ENCODE measurements at regions of chr10 and their contacts with region 1.

Region 1: DNA sequence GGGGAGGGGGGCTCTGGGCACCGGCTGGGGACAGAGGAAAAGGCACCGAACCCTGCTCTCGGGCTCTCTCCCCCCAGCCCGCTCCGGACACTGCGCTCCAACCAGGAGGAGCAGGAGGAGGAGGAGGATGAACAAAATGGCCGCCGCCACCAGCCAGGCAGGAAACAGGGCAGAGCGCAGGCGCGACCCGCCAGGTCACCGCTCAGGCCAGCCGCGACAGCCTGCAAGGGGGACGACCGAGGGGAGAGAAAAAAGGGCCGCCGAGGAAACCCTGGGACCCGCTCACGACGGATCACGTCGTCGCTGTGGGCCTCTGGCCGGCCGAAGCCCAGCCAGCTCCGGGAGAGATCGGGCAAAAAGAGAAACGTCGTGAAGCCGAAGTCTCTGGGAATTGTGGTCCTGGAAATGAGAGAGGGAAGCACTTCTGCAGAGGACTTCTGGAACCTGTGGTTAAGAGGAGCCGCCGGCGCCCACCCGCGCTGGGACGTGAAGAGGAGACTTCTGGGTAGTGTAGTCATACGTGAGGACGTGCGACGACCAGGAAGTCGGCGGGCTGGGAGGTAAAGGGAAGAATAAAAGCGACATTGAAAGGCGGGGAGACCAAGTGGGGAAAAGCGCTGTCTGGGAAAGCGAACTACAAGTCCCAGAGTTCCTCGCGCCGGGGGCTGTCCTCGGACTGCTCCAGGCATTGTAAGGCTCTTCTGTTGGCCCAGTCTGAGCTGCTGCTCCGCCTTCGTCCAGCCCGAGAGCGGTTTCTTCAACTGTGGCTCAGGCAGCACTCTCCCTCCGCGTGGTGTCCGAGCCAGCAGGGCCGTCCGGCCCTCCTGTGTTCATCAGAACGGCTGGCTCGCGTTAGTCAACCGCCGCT is at the start of gene TIAL1:
- DNase-seq: peak in 1 of 2 donors; percentile 99
- H3K4me3 ChIP-seq: peak within 1 kb of the TSS; percentile 73 to 91
- H3K27ac ChIP-seq: peak within 1 kb of the TSS; percentile 98
- H3K4me1 ChIP-seq: peaks cover 46% of the 10 kb centered on the region
- H3K27me3 ChIP-seq: no peaks in the 10 kb centered on the region
- CTCF ChIP-seq: no peak
- POLR2A ChIP-seq: peak in 1 of 2 donors; percentile 27
- total RNA-seq, gene TIAL1: 71.2 TPM

Region 2: GRCh38 chr10:119650692-119651513 is 54.1 kb after region 1 on chr10 and contains the start of gene BAG3:
- intact Hi-C with region 1: loop called (anchors 5 kb)
- DNase-seq: peak in 1 of 2 donors; percentile 96
- H3K4me3 ChIP-seq: peak within 1 kb of the TSS; percentile 80 to 97
- H3K27ac ChIP-seq: peak within 1 kb of the TSS; percentile 100
- H3K4me1 ChIP-seq: peaks cover 34% of the 10 kb centered on the region
- H3K27me3 ChIP-seq: no peaks in the 10 kb centered on the region
- CTCF ChIP-seq: no peak
- POLR2A ChIP-seq: peak in 1 of 2 donors; percentile 81
- total RNA-seq, gene BAG3: 69.0 TPM

Region 3: DNA sequence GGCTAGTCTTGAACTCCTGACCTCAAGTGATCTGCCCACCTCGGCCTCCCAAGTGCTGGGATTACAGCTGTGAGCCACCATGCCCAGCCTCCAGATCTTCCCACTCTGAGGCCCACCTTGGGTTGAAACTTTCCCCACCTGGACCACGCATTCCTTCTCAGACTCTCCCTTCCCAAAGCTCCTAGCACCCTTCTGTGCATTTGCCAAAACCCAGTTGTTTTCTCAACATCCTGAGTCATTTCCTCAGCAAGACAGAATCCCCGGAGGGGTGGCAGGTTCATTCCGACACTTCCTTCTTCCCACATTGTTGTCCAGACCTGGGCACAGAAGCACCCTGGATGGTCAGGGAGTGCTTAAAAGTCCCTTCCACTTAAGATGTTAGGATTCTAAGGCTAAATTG is 83.3 kb after region 1 on chr10:
- intact Hi-C with region 1: no loop called
- DNase-seq: no peak
- H3K4me3 ChIP-seq: no peak overlapping the region
- H3K27ac ChIP-seq: peak overlapping the region; percentile 68
- H3K4me1 ChIP-seq: peaks cover 64% of the 10 kb centered on the region
- H3K27me3 ChIP-seq: no peaks in the 10 kb centered on the region
- CTCF ChIP-seq: no peak
- POLR2A ChIP-seq: no peak

Region 4: DNA sequence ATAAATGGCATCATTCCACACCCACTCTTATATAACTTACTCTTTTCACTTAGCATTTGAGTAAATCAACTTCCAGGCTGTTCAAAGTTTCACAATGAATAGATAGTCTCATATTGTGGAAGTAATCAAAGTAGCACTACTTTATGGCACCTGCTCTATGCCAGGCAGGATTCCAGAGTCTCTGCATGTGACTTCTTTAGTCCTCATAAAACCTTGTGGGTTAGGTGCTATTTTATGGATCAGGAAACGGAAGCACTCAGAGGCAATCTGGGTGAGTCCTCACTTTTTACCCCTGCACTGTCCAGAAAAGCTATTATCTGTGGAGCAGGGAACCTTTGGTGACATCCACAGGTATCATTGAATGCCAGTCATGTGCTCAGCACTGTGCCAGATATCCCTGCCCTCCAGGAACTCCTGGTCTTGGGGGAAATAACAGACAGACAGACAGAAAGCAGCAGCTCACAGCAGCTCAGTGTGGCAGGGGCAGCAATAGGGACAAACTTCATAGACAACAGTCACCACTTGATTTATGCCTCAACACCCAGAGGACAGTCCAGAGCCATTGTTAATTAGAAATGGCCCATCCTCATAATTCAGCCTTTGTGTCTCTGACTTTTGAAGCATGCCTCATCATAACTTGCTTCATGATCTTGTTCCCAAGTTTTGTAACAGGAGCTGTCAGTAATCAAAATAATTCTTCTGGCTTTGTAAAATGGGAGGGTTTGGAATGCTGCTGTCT is 456.4 kb after region 1 on chr10:
- intact Hi-C with region 1: no loop called
- DNase-seq: no peak
- H3K4me3 ChIP-seq: no peak overlapping the region
- H3K27ac ChIP-seq: no peak overlapping the region
- H3K4me1 ChIP-seq: no peaks in the 10 kb centered on the region
- H3K27me3 ChIP-seq: no peaks in the 10 kb centered on the region
- CTCF ChIP-seq: no peak
- POLR2A ChIP-seq: no peak

Region 5: DNA sequence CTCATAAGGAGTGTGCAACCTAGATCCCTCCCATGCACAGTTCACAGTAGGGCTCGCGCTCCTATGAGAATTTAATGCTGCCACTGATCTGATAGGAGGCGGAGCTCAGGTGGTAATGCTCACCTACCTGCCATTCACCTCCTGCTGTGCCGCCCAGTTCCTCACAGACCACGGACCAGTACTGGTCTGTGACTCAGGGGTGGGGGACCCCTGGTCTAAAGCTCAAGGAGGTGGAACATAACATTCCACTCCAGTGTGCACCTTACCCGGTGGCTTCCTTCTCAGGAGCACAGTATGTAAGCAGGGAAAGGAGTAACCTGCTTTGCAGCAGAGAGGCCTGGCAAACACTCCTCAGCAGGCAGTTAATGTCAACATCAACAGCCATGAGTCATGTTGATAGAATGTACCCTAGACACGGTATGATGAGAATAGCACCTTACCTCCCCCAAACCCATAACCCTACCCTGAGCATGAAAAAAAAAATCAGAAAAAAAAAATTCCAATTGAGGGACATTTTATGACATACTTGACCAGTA is 1728.0 kb after region 1 on chr10:
- intact Hi-C with region 1: no loop called
- DNase-seq: no peak
- H3K4me3 ChIP-seq: no peak overlapping the region
- H3K27ac ChIP-seq: no peak overlapping the region
- H3K4me1 ChIP-seq: no peaks in the 10 kb centered on the region
- H3K27me3 ChIP-seq: no peaks in the 10 kb centered on the region
- CTCF ChIP-seq: no peak
- POLR2A ChIP-seq: no peak

Measured in vagina (tissue), 2 donors.